Activated T-helper 2 cell treated with anti-CD3 and anti-CD28 coated beads, Interferon-gamma antibody, Interleukin-2, Interleukin-4, amounts not matched to agents 10 μg/mL and 5 μg/mL and 100 μg/mL, durations not matched to agents 14 hours and 24 hours and 36 hours (primary cell): ENCODE measurements at regions of chr6 and their contacts with region 1.

Region 1: GRCh38 chr6:22145823-22146677 is 150.8 kb downstream of the PRL start:
- DNase-seq: no peak
- H3K4me3 Mint-ChIP-seq: peak overlapping the region; percentile 75
- H3K27ac Mint-ChIP-seq: peak overlapping the region; percentile 44
- H3K4me1 Mint-ChIP-seq: peaks cover 37% of the 10 kb centered on the region
- H3K27me3 Mint-ChIP-seq: peaks cover 40% of the 10 kb centered on the region

Region 2: GRCh38 chr6:22102671-22103070 is 43.4 kb before region 1 on chr6:
- intact Hi-C with region 1: loop called (anchors 2 kb)
- DNase-seq: no peak
- H3K4me3 Mint-ChIP-seq: no peak overlapping the region
- H3K27ac Mint-ChIP-seq: peak overlapping the region; percentile 85
- H3K4me1 Mint-ChIP-seq: peaks cover 19% of the 10 kb centered on the region
- H3K27me3 Mint-ChIP-seq: no peaks in the 10 kb centered on the region